ENCODE measurements at regions of chr1 and their contacts with region 1.

Region 1: GRCh38 chr1:200732438-200732837 is 6.3 kb upstream of the CAMSAP2 start:
- DNase-seq: no peak
- ATAC-seq: no peak
- H3K4me3 ChIP-seq: no peak overlapping the region
- H3K27ac ChIP-seq: no peak overlapping the region
- H3K4me1 ChIP-seq: no peaks in the 10 kb centered on the region
- H3K27me3 ChIP-seq: no peaks in the 10 kb centered on the region
- CTCF ChIP-seq: no peak
- EP300 ChIP-seq: no peak
- POLR2A ChIP-seq: no peak
- RAD21 ChIP-seq: no peak

Region 2: GRCh38 chr1:200992382-200993048 is 260.1 kb after region 1 on chr1:
- CTCF ChIA-PET with region 1: no interaction called
- POLR2A ChIA-PET with region 1: interaction called, 12 read pairs
- RAD21 ChIA-PET with region 1: no interaction called
- SMC1A ChIA-PET with region 1: no interaction called
- in situ Hi-C with region 1: no loop called
- intact Hi-C with region 1: no loop called
- DNase-seq: no peak
- ATAC-seq: no peak
- H3K4me3 ChIP-seq: no peak overlapping the region
- H3K27ac ChIP-seq: no peak overlapping the region
- H3K4me1 ChIP-seq: no peaks in the 10 kb centered on the region
- H3K27me3 ChIP-seq: no peaks in the 10 kb centered on the region
- CTCF ChIP-seq: no peak
- EP300 ChIP-seq: no peak
- POLR2A ChIP-seq: no peak
- RAD21 ChIP-seq: no peak